GM12878 (cell line): ENCODE measurements at regions of chr17 and their contacts with region 1.

Region 1: DNA sequence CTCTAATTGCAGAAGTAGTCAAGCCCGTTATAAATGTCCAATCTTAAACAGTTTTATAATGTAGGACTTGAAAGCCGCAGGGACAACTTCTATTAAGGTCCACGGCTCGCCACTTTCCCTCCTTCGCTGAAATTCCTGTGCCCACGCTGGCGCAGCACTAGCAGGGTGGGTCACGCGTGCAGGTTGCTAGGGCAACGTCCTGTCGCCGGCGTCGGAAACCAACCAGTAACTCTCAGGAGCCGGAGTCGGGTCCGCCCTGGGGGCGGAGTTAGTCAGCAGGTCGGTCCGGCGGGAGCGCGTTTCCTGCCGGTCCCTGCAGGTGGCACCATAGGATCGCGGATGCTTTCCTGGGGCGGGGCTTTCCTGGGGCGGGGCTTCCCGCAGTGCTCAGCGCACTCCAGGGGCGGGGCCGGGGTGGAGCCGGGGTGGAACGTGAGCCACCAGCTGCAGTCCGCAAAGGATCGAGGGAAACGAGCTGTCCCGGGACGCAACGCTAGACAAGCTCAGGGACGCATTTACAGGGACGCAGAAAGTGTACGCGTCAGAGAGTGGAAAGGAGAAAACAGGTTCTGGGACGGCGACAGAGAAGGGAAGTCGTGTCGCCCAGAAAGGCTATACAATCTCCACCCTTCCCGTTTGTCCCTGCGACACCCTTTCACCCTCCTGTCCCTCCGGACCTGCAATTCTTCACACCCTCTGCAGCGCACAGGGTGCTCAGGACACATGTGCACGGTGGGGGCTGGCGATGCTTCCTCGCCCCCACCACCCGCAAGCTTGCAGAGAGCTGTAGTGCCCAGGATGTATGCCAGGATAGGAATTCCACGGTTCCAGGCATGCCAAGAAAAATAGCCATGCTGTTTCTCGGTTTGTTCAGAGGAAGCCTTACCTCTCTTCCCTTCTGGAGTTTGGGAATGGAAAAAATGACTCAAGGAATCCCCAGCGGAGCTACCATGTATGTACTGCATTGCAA is 12.4 kb downstream of the COPZ2 start:
- DNase-seq: peak; percentile 70
- ATAC-seq: peak; percentile 91
- H3K4me3 ChIP-seq: peak overlapping the region; percentile 80
- H3K27ac ChIP-seq: no peak overlapping the region
- H3K4me1 ChIP-seq: peaks cover 27% of the 10 kb centered on the region
- H3K27me3 ChIP-seq: no peaks in the 10 kb centered on the region; a peak in 2 of 4 replicates
- CTCF ChIP-seq: peak; percentile 85 to 98 (median 89)
- EP300 ChIP-seq: no peak
- POLR2A ChIP-seq: peak; percentile 54; the same call in 1 of the 2 replicates
- RAD21 ChIP-seq: peak; percentile 88

Region 2: GRCh38 chr17:47978324-47978723 is 46.9 kb before region 1 on chr17:
- CTCF ChIA-PET with region 1: interaction called, 454 read pairs
- POLR2A ChIA-PET with region 1: interaction called, 7 read pairs
- RAD21 ChIA-PET with region 1: interaction called, 80 read pairs
- SMC1A ChIA-PET with region 1: interaction called, 332 read pairs
- in situ Hi-C with region 1: no loop called
- intact Hi-C with region 1: no loop called
- DNase-seq: no peak
- ATAC-seq: peak; percentile 98
- H3K4me3 ChIP-seq: no peak overlapping the region
- H3K27ac ChIP-seq: no peak overlapping the region
- H3K4me1 ChIP-seq: no peaks in the 10 kb centered on the region; the same call in 1 of the 2 replicates
- H3K27me3 ChIP-seq: no peaks in the 10 kb centered on the region
- CTCF ChIP-seq: peak; percentile 73 to 86 (median 77)
- EP300 ChIP-seq: no peak
- POLR2A ChIP-seq: no peak
- RAD21 ChIP-seq: peak; percentile 86

Region 3: DNA sequence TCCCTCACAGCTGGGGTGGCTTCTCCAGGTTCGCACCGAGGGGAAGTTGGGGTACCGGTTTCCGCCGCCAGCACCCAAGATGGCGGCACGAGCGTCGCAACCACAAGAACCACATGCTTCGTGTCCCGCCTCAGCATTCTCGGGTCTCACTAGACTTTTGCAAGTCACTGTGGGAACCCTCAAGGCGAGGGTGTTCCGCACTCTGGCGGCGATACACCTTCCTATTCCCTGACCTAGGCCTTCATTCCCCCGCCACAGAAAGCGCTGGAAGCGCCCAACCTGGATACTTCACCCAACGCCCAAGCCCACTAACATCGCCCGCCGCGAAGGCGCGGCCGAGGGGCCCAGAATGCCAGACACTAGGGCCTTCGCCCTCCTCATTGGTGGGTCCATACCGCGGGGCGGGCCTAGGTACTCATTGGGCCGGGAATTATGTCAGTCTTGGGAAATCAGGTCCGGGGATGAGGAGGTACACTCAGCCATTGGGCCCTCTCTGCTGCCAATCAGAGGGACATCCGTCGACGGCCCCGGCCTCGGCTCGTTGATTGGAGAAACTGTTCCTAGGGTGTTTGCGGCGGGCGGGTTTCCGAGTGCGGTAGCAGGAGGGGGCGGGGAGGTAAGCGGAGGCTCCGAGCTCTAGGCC is 22.6 kb after region 1 on chr17 and contains the start of gene NFE2L1:
- CTCF ChIA-PET with region 1: interaction called, 87 read pairs
- POLR2A ChIA-PET with region 1: interaction called, 29 read pairs
- RAD21 ChIA-PET with region 1: interaction called, 47 read pairs
- SMC1A ChIA-PET with region 1: interaction called, 39 read pairs
- in situ Hi-C with region 1: no loop called
- intact Hi-C with region 1: loop called (anchors 2 kb)
- DNase-seq: peak; percentile 99
- ATAC-seq: peak; percentile 93
- H3K4me3 ChIP-seq: peak within 1 kb of the TSS; percentile 97
- H3K27ac ChIP-seq: peak within 1 kb of the TSS; percentile 93
- H3K4me1 ChIP-seq: peaks cover 12% of the 10 kb centered on the region; the same call in 1 of the 2 replicates
- H3K27me3 ChIP-seq: no peaks in the 10 kb centered on the region
- CTCF ChIP-seq: no peak
- EP300 ChIP-seq: peak in 1 of 2 experiments; percentile 37; a peak in 1 of 4 replicates
- POLR2A ChIP-seq: peak; percentile 96
- RAD21 ChIP-seq: no peak
- polyA plus RNA-seq, gene NFE2L1: 3.8 to 4.1 TPM

Region 4: DNA sequence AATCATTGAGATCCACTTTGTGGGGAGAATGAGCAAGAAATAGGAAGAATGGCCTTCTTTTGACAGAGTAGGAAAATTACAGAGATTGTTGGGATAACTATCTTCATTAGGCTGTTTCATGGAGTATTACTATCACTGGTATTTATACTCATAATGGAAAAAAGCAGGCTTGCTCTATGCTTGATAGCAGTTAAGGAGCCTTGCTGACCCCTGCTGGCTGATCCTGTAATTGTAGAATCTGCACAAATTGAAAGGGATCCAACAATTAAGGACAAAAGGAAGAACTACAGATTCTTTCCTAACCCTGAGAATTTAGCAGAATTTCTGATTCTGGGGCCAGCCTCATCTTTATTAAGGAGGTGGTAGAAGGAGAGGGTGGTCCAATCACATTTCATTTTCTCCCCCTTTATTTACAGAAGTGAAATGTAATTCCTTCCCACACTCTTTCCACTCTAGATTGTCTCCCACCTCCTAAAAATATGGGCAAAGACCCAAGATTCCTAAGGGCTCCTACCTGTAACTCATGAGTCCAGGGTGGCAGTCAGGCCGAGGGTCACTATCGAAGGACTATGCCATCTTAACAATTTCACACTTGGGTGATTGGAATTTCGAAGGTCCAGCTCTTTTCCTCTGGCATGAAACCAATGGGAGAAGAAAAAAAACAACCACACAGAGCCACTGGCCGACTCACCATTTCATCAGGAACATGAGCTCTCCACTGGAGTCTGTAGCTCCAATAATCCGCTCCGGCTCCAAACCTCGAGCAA is 49.3 kb after region 1 on chr17:
- CTCF ChIA-PET with region 1: interaction called, 176 read pairs
- POLR2A ChIA-PET with region 1: interaction called, 5 read pairs
- RAD21 ChIA-PET with region 1: interaction called, 117 read pairs
- SMC1A ChIA-PET with region 1: interaction called, 100 read pairs
- in situ Hi-C with region 1: loop called (anchors 5 kb)
- intact Hi-C with region 1: loop called (anchors 1 kb)
- DNase-seq: no peak
- ATAC-seq: peak; percentile 84
- H3K4me3 ChIP-seq: no peak overlapping the region
- H3K27ac ChIP-seq: no peak overlapping the region
- H3K4me1 ChIP-seq: no peaks in the 10 kb centered on the region
- H3K27me3 ChIP-seq: no peaks in the 10 kb centered on the region
- CTCF ChIP-seq: peak; percentile 75 to 91 (median 79)
- EP300 ChIP-seq: no peak
- POLR2A ChIP-seq: no peak
- RAD21 ChIP-seq: peak; percentile 86

Region 5: DNA sequence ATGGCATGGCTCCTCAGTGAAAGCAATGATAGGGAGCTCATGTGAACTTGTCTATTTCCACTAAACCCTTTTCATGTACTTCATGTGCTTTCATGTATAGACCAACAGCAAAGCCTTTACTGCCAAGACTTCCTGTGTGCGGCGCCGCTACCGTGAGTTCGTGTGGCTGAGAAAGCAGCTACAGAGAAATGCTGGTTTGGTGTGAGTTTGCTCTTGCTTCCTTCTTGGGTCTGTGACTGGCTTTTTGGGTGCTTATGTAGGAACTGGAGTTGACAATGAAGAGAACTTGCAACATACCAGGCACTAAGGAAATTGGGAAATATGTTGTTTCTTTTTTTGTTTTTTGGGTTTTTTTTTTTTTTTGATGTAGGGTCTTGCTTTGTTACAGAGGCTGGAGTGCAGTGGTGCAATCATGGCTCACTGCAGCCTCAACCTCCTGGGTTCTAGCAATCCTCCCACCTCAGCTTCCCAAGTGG is 88.0 kb after region 1 on chr17:
- CTCF ChIA-PET with region 1: interaction called, 48 read pairs
- POLR2A ChIA-PET with region 1: interaction called, 5 read pairs
- RAD21 ChIA-PET with region 1: interaction called, 16 read pairs
- SMC1A ChIA-PET with region 1: interaction called, 6 read pairs
- in situ Hi-C with region 1: no loop called
- intact Hi-C with region 1: no loop called
- DNase-seq: peak; percentile 71
- ATAC-seq: peak; percentile 55
- H3K4me3 ChIP-seq: peak overlapping the region; percentile 97
- H3K27ac ChIP-seq: peak overlapping the region; percentile 93
- H3K4me1 ChIP-seq: no peaks in the 10 kb centered on the region; the same call in none of the 2 replicates
- H3K27me3 ChIP-seq: no peaks in the 10 kb centered on the region
- CTCF ChIP-seq: no peak
- EP300 ChIP-seq: no peak
- POLR2A ChIP-seq: peak; percentile 55; the same call in 1 of the 2 replicates
- RAD21 ChIP-seq: no peak

Region 6: GRCh38 chr17:48393283-48393682 is 368.1 kb after region 1 on chr17:
- CTCF ChIA-PET with region 1: no interaction called
- POLR2A ChIA-PET with region 1: no interaction called
- RAD21 ChIA-PET with region 1: no interaction called
- SMC1A ChIA-PET with region 1: no interaction called
- in situ Hi-C with region 1: no loop called
- intact Hi-C with region 1: no loop called
- DNase-seq: no peak
- ATAC-seq: no peak
- H3K4me3 ChIP-seq: no peak overlapping the region
- H3K27ac ChIP-seq: no peak overlapping the region
- H3K4me1 ChIP-seq: peaks cover 3% of the 10 kb centered on the region; the same call in 1 of the 2 replicates
- H3K27me3 ChIP-seq: no peaks in the 10 kb centered on the region
- CTCF ChIP-seq: no peak
- EP300 ChIP-seq: no peak
- POLR2A ChIP-seq: no peak
- RAD21 ChIP-seq: no peak

Region 7: DNA sequence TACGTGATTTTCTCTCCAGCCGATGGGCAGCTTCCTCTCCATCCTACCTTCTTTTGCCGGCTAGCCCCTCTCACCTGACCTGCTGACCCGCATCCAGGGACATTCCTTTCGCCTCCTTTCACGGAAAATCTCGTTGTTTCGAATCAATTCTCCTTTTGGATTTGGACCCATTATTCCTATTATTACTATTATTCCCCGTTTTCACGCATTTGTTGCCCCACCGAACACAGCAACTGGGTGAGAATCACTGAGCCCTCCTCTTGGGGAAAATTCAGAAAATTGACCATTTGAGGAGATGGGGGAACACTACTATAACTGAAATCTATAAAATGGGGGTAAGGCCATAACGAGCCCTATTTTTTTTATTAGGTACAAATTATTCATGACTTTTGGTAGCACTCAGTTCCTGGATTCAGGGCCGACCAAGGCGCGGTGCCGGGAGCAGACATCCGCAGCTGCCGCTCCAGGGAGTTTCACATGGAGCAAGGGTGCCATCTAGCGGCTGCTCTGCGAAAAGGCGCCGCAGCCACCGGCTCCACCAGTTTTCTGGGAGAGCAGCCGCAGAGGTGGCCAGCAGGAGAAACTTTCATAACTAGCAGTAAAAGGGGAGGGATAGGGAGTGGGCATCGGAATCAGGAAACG is 593.2 kb after region 1 on chr17:
- CTCF ChIA-PET with region 1: interaction called, 14 read pairs
- POLR2A ChIA-PET with region 1: no interaction called
- RAD21 ChIA-PET with region 1: interaction called, 7 read pairs
- SMC1A ChIA-PET with region 1: no interaction called
- in situ Hi-C with region 1: no loop called
- intact Hi-C with region 1: loop called (anchors 1 kb)
- DNase-seq: no peak
- ATAC-seq: peak; percentile 88
- H3K4me3 ChIP-seq: no peak overlapping the region
- H3K27ac ChIP-seq: no peak overlapping the region
- H3K4me1 ChIP-seq: no peaks in the 10 kb centered on the region
- H3K27me3 ChIP-seq: peaks cover 36 to 46% of the 10 kb centered on the region in 2 experiments
- CTCF ChIP-seq: peak; percentile 94 to 97 (median 96)
- EP300 ChIP-seq: no peak
- POLR2A ChIP-seq: no peak
- RAD21 ChIP-seq: peak; percentile 85